Dendritic cell treated with granulocyte-macrophage colony-stimulating factor and Interleukin-4, amounts not matched to agents 40 ng/mL and 50 ng/mL, for 4 days (primary cell): ENCODE measurements at regions of chr16 and their contacts with region 1.

Region 1: GRCh38 chr16:31142109-31143010 is 6.8 kb upstream of the PRSS8 start:
- H3K4me3 Mint-ChIP-seq: peak overlapping the region; percentile 65
- H3K27ac Mint-ChIP-seq: peak overlapping the region; percentile 89
- H3K4me1 Mint-ChIP-seq: peaks cover 66% of the 10 kb centered on the region
- H3K27me3 Mint-ChIP-seq: no peaks in the 10 kb centered on the region

Region 2: GRCh38 chr16:31108035-31108793 is 34.1 kb before region 1 on chr16 and contains the start of gene BCKDK:
- intact Hi-C with region 1: loop called (anchors 5 kb)
- H3K4me3 Mint-ChIP-seq: peak within 1 kb of the TSS; percentile 88
- H3K27ac Mint-ChIP-seq: peak within 1 kb of the TSS; percentile 75
- H3K4me1 Mint-ChIP-seq: peaks cover 58% of the 10 kb centered on the region
- H3K27me3 Mint-ChIP-seq: no peaks in the 10 kb centered on the region

Region 3: GRCh38 chr16:31117391-31118197 is 24.8 kb before region 1 on chr16 and contains the start of gene KAT8:
- intact Hi-C with region 1: loop called (anchors 1 kb)
- H3K4me3 Mint-ChIP-seq: peak within 1 kb of the TSS; percentile 91
- H3K27ac Mint-ChIP-seq: peak within 1 kb of the TSS; percentile 98
- H3K4me1 Mint-ChIP-seq: peaks cover 58% of the 10 kb centered on the region
- H3K27me3 Mint-ChIP-seq: no peaks in the 10 kb centered on the region